ENCODE measurements at regions of chr5 and their contacts with region 1.

Region 1: GRCh38 chr5:97888439-97888838 is 705.4 kb upstream of the RIOK2 start:
- DNase-seq: no peak
- ATAC-seq: no peak
- H3K4me3 ChIP-seq: no peak overlapping the region
- H3K27ac ChIP-seq: no peak overlapping the region
- H3K4me1 ChIP-seq: no peaks in the 10 kb centered on the region
- H3K27me3 ChIP-seq: no peaks in the 10 kb centered on the region
- CTCF ChIP-seq: no peak

Region 2: DNA sequence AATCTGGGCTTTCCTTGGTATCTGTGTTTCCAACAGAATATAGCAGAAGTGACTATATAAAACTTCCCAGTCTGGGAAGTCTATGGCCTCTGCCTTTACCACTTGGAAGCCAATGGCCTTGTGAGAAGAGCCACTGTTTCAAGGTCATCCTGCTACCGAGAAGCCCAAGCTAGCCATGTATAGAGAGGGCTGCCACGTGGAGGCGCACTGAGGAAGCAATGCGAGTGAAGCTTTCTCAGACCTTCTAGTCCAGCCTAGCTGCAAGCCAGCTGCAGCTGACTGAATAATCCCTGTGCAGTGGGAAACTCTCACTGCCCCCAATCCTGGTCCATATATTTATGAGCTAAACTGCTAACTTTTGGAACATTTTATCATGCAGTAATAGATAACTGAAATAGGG is 43.6 kb before region 1 on chr5:
- CTCF ChIA-PET with region 1: no interaction called
- POLR2A ChIA-PET with region 1: interaction called, 28 read pairs
- intact Hi-C with region 1: no loop called
- DNase-seq: no peak
- ATAC-seq: no peak
- H3K4me3 ChIP-seq: no peak overlapping the region
- H3K27ac ChIP-seq: no peak overlapping the region
- H3K4me1 ChIP-seq: peaks cover 10% of the 10 kb centered on the region
- H3K27me3 ChIP-seq: no peaks in the 10 kb centered on the region
- CTCF ChIP-seq: no peak

Measured in PC-3 (cell line).